ENCODE measurements at regions of chr10 and their contacts with region 1.

Region 1: DNA sequence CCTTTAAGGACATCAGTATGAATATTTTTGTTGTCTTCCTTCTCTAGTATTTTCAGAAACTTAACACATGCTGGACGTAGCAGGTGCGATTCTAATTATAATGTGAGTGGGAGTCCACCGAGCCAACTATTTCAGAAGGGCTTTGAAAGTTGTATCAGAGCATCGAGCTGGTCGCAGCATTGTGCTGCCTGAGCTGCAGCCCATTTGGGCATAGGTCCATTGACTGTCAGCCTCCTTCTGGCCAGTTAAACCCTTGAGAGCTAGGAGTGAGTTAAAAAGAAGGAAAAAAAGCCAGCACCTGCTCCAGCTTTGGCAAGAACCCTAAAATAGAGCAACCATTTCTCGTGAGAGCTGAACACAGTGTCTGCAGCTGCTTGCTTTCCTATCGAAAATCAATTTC is 47.8 kb downstream of the SLC35G1 start:
- DNase-seq: no peak
- ATAC-seq: no peak

Region 2: GRCh38 chr10:93821051-93821772 is 120.4 kb before region 1 on chr10:
- intact Hi-C with region 1: no loop called
- DNase-seq: no peak
- ATAC-seq: peak; percentile 81

Region 3: DNA sequence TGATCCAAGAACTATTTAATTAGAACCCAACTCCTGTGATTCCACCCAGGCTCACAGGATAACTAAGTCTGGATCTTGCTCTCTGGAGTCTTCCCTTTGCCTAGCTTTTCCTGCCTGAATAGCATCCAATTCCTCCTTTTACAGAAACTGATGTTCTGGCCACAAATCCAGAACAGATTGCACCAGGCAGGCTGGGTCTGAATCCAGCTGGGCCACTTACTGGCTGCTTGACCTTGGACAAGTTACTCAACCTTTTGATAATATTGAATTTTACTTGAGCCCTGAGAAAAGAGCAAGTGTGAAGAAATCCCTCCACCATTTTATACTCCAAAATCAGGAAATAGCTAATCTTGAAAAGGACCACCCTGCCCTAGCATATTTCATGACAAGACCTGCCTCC is 103.3 kb before region 1 on chr10:
- intact Hi-C with region 1: loop called in 1 of 2 experiments (anchors 5 kb)
- DNase-seq: no peak
- ATAC-seq: no peak